GM12878 (cell line): ENCODE measurements at regions of chr20 and their contacts with region 1.

Region 1: DNA sequence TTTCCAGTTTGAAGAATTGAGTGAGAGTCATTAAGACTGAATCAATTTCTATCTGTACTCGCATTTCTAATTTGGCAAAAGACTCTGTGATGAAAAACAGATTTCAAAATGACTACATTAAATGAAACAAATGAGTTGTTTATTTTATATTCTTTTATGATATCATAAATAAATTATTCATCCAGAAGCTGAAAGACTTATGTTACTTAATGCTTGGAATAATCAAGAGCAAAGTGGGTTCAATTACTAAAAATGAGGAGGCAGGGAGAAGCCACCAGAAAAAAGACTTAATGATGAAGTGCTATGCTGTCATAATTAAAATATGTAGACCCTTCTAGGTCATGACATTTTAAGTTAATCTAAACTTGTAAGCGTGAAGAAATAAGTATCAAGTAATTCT is 130.6 kb upstream of the FERMT1 start:
- DNase-seq: no peak
- ATAC-seq: no peak
- H3K4me3 ChIP-seq: no peak overlapping the region
- H3K27ac ChIP-seq: no peak overlapping the region
- H3K4me1 ChIP-seq: no peaks in the 10 kb centered on the region
- H3K27me3 ChIP-seq: no peaks in the 10 kb centered on the region; a peak in 1 of 4 replicates
- CTCF ChIP-seq: no peak
- EP300 ChIP-seq: no peak
- POLR2A ChIP-seq: no peak
- RAD21 ChIP-seq: no peak

Region 2: DNA sequence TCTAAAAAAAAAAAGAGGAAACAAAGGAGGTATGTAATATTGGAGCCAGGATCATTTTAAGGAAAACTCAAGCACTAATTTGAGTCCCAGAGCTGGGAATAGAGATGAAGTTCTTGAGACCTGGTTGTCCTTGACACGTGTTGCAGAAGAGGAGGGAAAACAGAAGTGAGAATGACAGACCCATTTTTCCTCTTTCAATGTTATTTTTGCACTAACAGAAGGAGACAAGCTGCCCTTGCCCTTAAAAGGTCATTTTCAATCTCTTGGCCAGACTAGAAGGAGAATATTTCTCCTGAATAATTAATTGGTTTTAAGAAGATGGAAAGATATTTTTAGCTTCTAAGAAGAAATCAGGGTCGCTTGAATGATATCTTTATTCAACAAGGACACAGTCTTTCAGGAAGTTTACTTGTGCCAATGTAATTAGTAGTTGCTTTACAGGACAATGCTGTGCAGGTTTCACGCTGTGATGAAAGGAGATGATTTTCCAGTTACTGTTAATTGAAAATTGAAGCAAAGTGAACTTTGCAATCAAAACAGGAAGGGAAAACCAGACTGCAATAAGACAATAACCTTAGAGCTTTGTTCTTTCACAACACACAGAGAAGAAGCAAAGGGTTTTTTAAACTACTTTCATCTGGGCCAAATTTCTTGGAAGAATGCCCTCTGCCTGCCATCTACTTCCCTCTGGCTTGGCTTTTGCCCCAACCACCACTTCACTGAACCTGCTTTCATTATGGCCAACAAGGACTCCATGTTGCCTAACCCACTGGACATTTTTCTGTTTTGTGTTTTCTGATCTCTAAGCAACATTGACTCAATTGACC is 611.0 kb before region 1 on chr20:
- CTCF ChIA-PET with region 1: no interaction called
- POLR2A ChIA-PET with region 1: no interaction called
- RAD21 ChIA-PET with region 1: no interaction called
- SMC1A ChIA-PET with region 1: no interaction called
- in situ Hi-C with region 1: no loop called
- intact Hi-C with region 1: no loop called
- DNase-seq: no peak
- ATAC-seq: no peak
- H3K4me3 ChIP-seq: no peak overlapping the region
- H3K27ac ChIP-seq: peak overlapping the region; percentile 75
- H3K4me1 ChIP-seq: peaks cover 48% of the 10 kb centered on the region
- H3K27me3 ChIP-seq: no peaks in the 10 kb centered on the region
- CTCF ChIP-seq: no peak
- EP300 ChIP-seq: no peak
- POLR2A ChIP-seq: no peak
- RAD21 ChIP-seq: no peak

Region 3: DNA sequence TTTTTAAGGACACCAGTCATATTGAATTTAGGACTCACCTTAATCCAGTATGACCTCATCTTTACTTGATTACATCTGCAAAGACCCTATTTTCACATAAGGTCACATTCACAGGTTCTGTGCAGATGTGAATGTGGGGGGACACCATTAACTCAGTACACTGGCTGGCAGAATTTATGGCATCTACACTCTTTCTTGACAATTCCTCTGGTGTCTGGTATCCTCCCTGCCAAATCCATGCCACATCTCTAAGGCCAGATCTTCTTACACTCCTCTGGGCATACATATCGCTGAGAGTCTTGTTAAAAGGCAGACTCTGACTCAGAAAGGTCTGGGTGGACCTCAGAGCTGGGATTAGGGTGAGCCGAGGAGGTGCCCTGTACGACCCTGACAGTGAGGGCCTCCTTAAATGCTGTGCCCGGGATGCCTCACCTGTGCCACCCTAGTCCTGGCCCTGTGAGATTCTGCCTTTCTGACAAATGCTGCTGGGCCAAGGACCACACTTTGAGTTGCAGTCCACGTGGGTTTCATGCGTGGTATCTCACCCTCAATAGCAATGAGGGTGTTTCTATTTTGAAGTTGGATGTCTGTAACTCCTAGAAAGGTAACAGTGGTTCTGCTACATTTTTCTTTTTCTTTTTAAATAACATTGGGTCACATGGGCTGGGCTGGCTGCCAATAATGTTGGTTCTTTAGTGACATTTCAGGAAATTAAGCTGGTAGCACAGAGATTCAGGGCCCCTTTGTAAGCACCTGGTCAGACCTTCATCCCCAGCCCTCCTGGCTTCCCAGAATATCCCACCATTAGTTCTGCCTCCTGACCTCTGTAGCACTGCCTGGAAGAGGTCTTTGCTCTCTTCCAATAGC is 182.3 kb before region 1 on chr20:
- CTCF ChIA-PET with region 1: no interaction called
- POLR2A ChIA-PET with region 1: no interaction called
- RAD21 ChIA-PET with region 1: no interaction called
- SMC1A ChIA-PET with region 1: no interaction called
- in situ Hi-C with region 1: no loop called
- intact Hi-C with region 1: no loop called
- DNase-seq: no peak
- ATAC-seq: no peak
- H3K4me3 ChIP-seq: no peak overlapping the region
- H3K27ac ChIP-seq: no peak overlapping the region
- H3K4me1 ChIP-seq: no peaks in the 10 kb centered on the region
- H3K27me3 ChIP-seq: no peaks in the 10 kb centered on the region
- CTCF ChIP-seq: no peak
- EP300 ChIP-seq: no peak
- POLR2A ChIP-seq: no peak
- RAD21 ChIP-seq: no peak

Region 4: GRCh38 chr20:6200092-6200491 is 53.3 kb before region 1 on chr20:
- CTCF ChIA-PET with region 1: no interaction called
- POLR2A ChIA-PET with region 1: no interaction called
- RAD21 ChIA-PET with region 1: no interaction called
- SMC1A ChIA-PET with region 1: no interaction called
- in situ Hi-C with region 1: no loop called
- intact Hi-C with region 1: no loop called
- DNase-seq: no peak
- ATAC-seq: no peak
- H3K4me3 ChIP-seq: no peak overlapping the region
- H3K27ac ChIP-seq: no peak overlapping the region
- H3K4me1 ChIP-seq: no peaks in the 10 kb centered on the region
- H3K27me3 ChIP-seq: no peaks in the 10 kb centered on the region
- CTCF ChIP-seq: no peak
- EP300 ChIP-seq: no peak
- POLR2A ChIP-seq: no peak
- RAD21 ChIP-seq: no peak

Region 5: GRCh38 chr20:6311841-6312655 is 58.7 kb after region 1 on chr20:
- CTCF ChIA-PET with region 1: no interaction called
- POLR2A ChIA-PET with region 1: no interaction called
- RAD21 ChIA-PET with region 1: no interaction called
- SMC1A ChIA-PET with region 1: no interaction called
- in situ Hi-C with region 1: no loop called
- intact Hi-C with region 1: loop called (anchors 10 kb)
- DNase-seq: no peak
- ATAC-seq: no peak
- H3K4me3 ChIP-seq: no peak overlapping the region
- H3K27ac ChIP-seq: no peak overlapping the region
- H3K4me1 ChIP-seq: no peaks in the 10 kb centered on the region
- H3K27me3 ChIP-seq: no peaks in the 10 kb centered on the region
- CTCF ChIP-seq: no peak
- EP300 ChIP-seq: no peak
- POLR2A ChIP-seq: no peak
- RAD21 ChIP-seq: no peak

Region 6: GRCh38 chr20:6333110-6333509 is 79.7 kb after region 1 on chr20:
- CTCF ChIA-PET with region 1: no interaction called
- POLR2A ChIA-PET with region 1: no interaction called
- RAD21 ChIA-PET with region 1: no interaction called
- SMC1A ChIA-PET with region 1: no interaction called
- in situ Hi-C with region 1: no loop called
- intact Hi-C with region 1: no loop called
- DNase-seq: no peak
- ATAC-seq: no peak
- H3K4me3 ChIP-seq: no peak overlapping the region
- H3K27ac ChIP-seq: no peak overlapping the region
- H3K4me1 ChIP-seq: no peaks in the 10 kb centered on the region
- H3K27me3 ChIP-seq: no peaks in the 10 kb centered on the region
- CTCF ChIP-seq: no peak
- EP300 ChIP-seq: no peak
- POLR2A ChIP-seq: no peak
- RAD21 ChIP-seq: no peak